ENCODE measurements at regions of chr2 and their contacts with region 1.

Region 1: GRCh38 chr2:185638771-185639170 is 99.8 kb upstream of the FSIP2 start:
- DNase-seq: no peak
- ATAC-seq: no peak
- H3K4me3 ChIP-seq: no peak overlapping the region
- H3K27ac ChIP-seq: no peak overlapping the region
- H3K4me1 ChIP-seq: no peaks in the 10 kb centered on the region
- H3K27me3 ChIP-seq: no peaks in the 10 kb centered on the region
- CTCF ChIP-seq: no peak
- POLR2A ChIP-seq: no peak

Region 2: DNA sequence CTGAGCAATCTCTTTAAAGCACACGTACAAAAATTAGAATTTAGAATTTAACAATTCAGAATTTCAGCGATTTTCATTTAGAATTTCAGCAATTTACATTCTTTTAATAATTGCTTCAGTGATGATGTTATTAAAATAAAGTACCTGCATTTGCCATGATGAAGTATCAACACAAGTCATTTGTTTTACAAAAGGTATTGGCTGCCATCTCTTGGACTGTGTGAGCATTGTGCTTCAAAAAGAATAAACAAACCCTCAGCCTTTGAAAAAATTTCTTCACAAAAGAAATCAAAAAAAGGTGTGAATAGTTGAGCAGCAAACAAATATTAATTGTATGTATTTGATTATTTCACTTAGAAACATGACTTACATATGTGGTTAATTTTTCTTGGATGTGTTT is 820.2 kb after region 1 on chr2:
- intact Hi-C with region 1: loop called in 1 of 10 experiments (anchors 5 kb)
- DNase-seq: no peak
- ATAC-seq: no peak
- H3K4me3 ChIP-seq: no peak overlapping the region
- H3K27ac ChIP-seq: no peak overlapping the region
- H3K4me1 ChIP-seq: no peaks in the 10 kb centered on the region
- H3K27me3 ChIP-seq: no peaks in the 10 kb centered on the region
- CTCF ChIP-seq: peak in 6 of 12 donors; percentile 11 to 37 (median 26)
- POLR2A ChIP-seq: no peak